ENCODE measurements at regions of chr10 and their contacts with region 1.

Region 1: DNA sequence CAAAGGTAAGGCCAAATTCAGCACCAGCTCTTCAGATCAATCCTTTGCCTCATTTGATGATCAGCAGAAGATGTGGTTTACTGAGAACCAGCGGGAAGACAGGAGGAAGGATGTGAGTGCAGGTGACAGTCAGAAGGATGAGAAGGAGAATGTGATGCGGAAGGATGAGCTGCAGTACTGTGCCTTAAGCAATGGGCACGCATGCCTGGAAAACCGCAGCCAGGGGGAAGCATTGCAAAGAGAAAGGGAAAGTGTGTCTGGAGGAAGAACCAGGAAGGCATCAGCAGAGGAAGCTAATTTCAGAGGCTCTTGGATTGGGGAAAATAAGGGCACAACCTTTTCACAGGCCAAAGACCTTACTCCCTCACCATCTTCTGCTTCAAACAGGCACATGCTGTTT is 25.7 kb downstream of the C10orf71 start:
- DNase-seq: no peak
- H3K4me3 ChIP-seq: no peak overlapping the region
- H3K27ac ChIP-seq: no peak overlapping the region
- H3K4me1 ChIP-seq: peaks cover 0 to 2% (median 0%) of the 10 kb centered on the region in 4 experiments; a peak in 1 of 7 replicates
- H3K27me3 ChIP-seq: no peaks in the 10 kb centered on the region; a peak in 1 of 7 replicates
- CTCF ChIP-seq: peak; percentile 58 to 79 (median 59)
- EP300 ChIP-seq: no peak
- POLR2A ChIP-seq: no peak
- RAD21 ChIP-seq: peak; percentile 75 to 84

Region 2: DNA sequence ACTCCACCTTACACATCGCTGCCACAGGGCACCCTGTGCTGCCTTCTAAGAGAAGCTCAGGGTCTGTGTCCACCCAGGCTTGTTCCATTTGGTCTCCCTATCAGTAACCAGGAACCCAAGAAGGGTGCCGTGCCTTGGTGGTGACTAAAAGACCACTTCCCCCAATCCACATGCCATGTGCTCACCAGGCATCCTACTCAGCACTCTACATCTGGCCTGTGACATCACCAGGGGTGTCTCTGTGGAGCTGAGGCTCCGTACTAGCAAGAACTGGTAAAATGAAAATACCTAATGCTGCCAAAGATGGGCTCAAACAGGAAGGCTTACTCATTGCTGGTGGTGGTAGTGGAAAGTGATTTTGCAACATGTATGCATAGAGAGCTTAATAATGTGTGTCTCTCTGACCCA is 44.7 kb before region 1 on chr10:
- CTCF ChIA-PET with region 1: interaction called, 16 read pairs
- POLR2A ChIA-PET with region 1: no interaction called
- DNase-seq: no peak
- H3K4me3 ChIP-seq: no peak overlapping the region
- H3K27ac ChIP-seq: no peak overlapping the region
- H3K4me1 ChIP-seq: no peaks in the 10 kb centered on the region; a peak in 1 of 7 replicates
- H3K27me3 ChIP-seq: no peaks in the 10 kb centered on the region
- CTCF ChIP-seq: no peak
- EP300 ChIP-seq: no peak
- POLR2A ChIP-seq: no peak
- RAD21 ChIP-seq: no peak

Region 3: DNA sequence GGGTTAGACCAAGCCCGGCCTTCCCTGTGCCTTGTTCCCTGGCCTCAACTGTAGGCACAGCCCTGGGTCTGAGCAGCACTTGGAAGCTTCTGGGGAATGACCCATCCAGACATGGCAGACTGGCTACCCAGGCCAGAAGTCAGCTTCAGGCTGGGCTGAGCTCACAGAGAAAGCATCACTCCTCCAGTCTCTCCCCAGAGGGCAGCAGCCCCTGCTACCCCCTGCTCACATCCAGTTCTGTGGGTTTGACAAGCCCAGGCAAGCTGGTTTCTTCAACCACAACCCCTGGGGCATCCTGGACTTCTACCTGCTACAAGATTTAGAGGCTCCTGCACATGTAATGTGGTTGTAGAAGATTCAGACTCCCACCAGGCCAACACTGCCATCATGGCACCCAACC is 16.8 kb before region 1 on chr10:
- CTCF ChIA-PET with region 1: interaction called, 15 read pairs
- POLR2A ChIA-PET with region 1: no interaction called
- DNase-seq: no peak
- H3K4me3 ChIP-seq: no peak overlapping the region
- H3K27ac ChIP-seq: no peak overlapping the region
- H3K4me1 ChIP-seq: peaks cover 0 to 4% (median 0%) of the 10 kb centered on the region in 4 experiments; a peak in 2 of 7 replicates
- H3K27me3 ChIP-seq: no peaks in the 10 kb centered on the region
- CTCF ChIP-seq: no peak
- EP300 ChIP-seq: no peak
- POLR2A ChIP-seq: no peak
- RAD21 ChIP-seq: no peak; a peak in 1 of 4 replicates

Region 4: GRCh38 chr10:49398000-49398861 is 73.5 kb after region 1 on chr10:
- CTCF ChIA-PET with region 1: interaction called, 10 read pairs
- POLR2A ChIA-PET with region 1: interaction called, 4 read pairs
- DNase-seq: peak in 1 of 2 experiments; percentile 88
- H3K4me3 ChIP-seq: peak overlapping the region; percentile 1 to 67 (median 41); a peak in 6 of 8 replicates
- H3K27ac ChIP-seq: no peak overlapping the region
- H3K4me1 ChIP-seq: peaks cover 4 to 14% (median 6%) of the 10 kb centered on the region in 4 experiments
- H3K27me3 ChIP-seq: peaks cover 48 to 85% (median 70%) of the 10 kb centered on the region in 4 experiments
- CTCF ChIP-seq: no peak; a peak in 1 of 4 replicates
- EP300 ChIP-seq: no peak
- POLR2A ChIP-seq: no peak
- RAD21 ChIP-seq: no peak

Region 5: GRCh38 chr10:49512121-49512809 is 187.6 kb after region 1 on chr10:
- CTCF ChIA-PET with region 1: interaction called, 20 read pairs
- POLR2A ChIA-PET with region 1: no interaction called
- DNase-seq: no peak
- H3K4me3 ChIP-seq: no peak overlapping the region
- H3K27ac ChIP-seq: no peak overlapping the region
- H3K4me1 ChIP-seq: no peaks in the 10 kb centered on the region
- H3K27me3 ChIP-seq: no peaks in the 10 kb centered on the region
- CTCF ChIP-seq: peak in 2 of 3 experiments; percentile 50 to 52; a peak in 3 of 4 replicates
- EP300 ChIP-seq: no peak
- POLR2A ChIP-seq: no peak
- RAD21 ChIP-seq: peak; percentile 78 to 81

Region 6: GRCh38 chr10:49518982-49519578 is 194.4 kb after region 1 on chr10:
- CTCF ChIA-PET with region 1: interaction called, 13 read pairs
- POLR2A ChIA-PET with region 1: no interaction called
- DNase-seq: peak in 1 of 2 experiments; percentile 56
- H3K4me3 ChIP-seq: no peak overlapping the region
- H3K27ac ChIP-seq: no peak overlapping the region
- H3K4me1 ChIP-seq: no peaks in the 10 kb centered on the region; a peak in 1 of 7 replicates
- H3K27me3 ChIP-seq: no peaks in the 10 kb centered on the region
- CTCF ChIP-seq: peak in 2 of 3 experiments; percentile 69; a peak in 3 of 4 replicates
- EP300 ChIP-seq: no peak
- POLR2A ChIP-seq: no peak
- RAD21 ChIP-seq: peak; percentile 82 to 85

Measured in H1 (cell line).